PC-3 (cell line): ENCODE measurements at regions of chr3 and their contacts with region 1.

Region 1: DNA sequence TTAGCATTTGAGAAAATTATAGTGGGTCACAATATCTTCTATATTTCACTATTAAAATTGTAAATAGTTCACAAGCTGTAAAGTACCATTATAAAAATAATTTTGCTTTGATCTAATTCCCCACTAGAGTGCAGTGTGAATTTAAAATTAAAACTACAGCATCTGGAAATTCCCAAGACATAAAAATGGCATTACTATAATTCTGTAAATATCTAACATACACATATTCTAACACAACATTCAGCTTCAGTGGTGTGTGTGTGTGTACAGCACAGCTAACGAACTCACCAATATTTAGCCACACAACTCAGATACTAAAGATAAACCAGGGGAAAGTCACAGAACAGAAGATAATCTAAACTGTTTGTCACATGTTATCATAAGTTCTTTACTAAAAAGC is 424.9 kb upstream of the ZNF385D start:
- DNase-seq: peak; percentile 44
- ATAC-seq: peak; percentile 46; the same call in 1 of the 2 replicates
- H3K4me3 ChIP-seq: no peak overlapping the region
- H3K27ac ChIP-seq: no peak overlapping the region
- H3K4me1 ChIP-seq: no peaks in the 10 kb centered on the region
- H3K27me3 ChIP-seq: no peaks in the 10 kb centered on the region
- CTCF ChIP-seq: peak; percentile 56

Region 2: DNA sequence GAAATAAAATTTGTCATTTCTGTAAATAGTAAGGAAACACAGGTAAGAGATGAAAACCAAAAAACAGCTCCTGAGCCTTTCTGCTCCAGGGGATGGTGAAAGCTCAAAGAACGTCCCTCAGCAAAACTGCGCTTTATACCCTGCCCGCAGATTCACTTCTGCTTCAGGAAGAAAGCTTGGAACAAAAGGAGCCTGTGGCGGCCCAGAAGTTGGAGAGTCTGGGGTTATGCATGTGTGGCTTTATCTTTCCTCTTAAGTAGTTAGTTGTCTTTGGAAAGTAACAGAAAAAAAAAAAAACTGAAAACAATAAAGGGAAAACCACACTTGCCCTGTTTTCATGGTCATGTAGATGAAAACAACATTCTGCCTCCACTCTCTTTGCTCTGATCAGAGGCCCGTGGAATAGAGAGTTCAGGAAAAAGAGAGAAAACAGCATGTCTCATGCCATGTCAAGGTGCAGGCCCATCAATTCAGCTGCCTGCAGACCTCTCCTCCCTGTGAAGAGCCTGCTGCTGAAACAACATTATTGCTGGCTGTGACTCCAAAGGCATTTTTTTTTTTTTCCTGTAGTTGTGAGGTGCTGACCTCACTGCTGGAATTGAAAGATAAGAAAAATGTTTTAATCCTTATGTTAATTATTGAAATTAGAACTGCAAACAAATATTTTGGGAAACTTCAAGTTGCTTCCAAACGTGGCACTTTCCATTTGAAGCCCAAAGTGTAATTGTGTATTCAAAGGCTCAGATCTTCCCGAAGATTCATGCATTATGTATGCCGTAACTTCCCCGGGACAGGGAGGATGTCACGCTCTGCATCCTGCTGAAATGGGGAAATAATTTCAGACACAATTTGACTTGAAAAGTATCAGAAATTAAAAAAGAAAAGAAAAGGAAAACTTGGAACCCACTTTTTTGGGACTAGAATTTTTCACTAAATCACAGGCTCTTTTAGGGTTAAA is 316.5 kb before region 1 on chr3:
- CTCF ChIA-PET with region 1: no interaction called
- POLR2A ChIA-PET with region 1: no interaction called
- intact Hi-C with region 1: no loop called
- DNase-seq: no peak
- ATAC-seq: no peak
- H3K4me3 ChIP-seq: no peak overlapping the region
- H3K27ac ChIP-seq: no peak overlapping the region
- H3K4me1 ChIP-seq: no peaks in the 10 kb centered on the region
- H3K27me3 ChIP-seq: no peaks in the 10 kb centered on the region
- CTCF ChIP-seq: no peak

Region 3: GRCh38 chr3:22319446-22319845 is 143.5 kb after region 1 on chr3:
- CTCF ChIA-PET with region 1: no interaction called
- POLR2A ChIA-PET with region 1: no interaction called
- intact Hi-C with region 1: loop called (anchors 2 kb)
- DNase-seq: peak; percentile 37
- ATAC-seq: peak; percentile 62
- H3K4me3 ChIP-seq: no peak overlapping the region
- H3K27ac ChIP-seq: no peak overlapping the region
- H3K4me1 ChIP-seq: no peaks in the 10 kb centered on the region
- H3K27me3 ChIP-seq: no peaks in the 10 kb centered on the region
- CTCF ChIP-seq: no peak

Region 4: GRCh38 chr3:22334996-22335395 is 159.0 kb after region 1 on chr3:
- CTCF ChIA-PET with region 1: no interaction called
- POLR2A ChIA-PET with region 1: no interaction called
- intact Hi-C with region 1: no loop called
- DNase-seq: no peak
- ATAC-seq: no peak
- H3K4me3 ChIP-seq: no peak overlapping the region
- H3K27ac ChIP-seq: no peak overlapping the region
- H3K4me1 ChIP-seq: no peaks in the 10 kb centered on the region
- H3K27me3 ChIP-seq: no peaks in the 10 kb centered on the region
- CTCF ChIP-seq: no peak

Region 5: DNA sequence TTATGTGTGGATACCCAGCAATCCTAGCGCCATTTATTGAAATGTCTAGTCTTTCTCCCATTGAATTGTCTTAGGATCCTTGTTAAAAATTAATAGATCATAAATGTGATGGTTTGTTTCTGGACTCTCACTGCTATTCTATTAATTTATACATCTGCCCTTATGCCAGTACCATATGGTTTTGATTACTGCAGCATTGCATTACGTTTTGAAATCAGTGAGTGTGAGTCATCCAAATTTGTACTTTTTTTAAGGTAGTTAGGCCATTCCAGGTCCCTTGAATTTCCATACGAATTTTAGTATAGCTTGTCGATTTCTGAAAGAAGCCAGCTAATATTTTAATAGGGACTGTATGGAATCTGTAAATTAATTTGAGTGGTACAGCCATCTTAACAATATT is 223.6 kb after region 1 on chr3:
- CTCF ChIA-PET with region 1: no interaction called
- POLR2A ChIA-PET with region 1: no interaction called
- intact Hi-C with region 1: no loop called
- DNase-seq: no peak
- ATAC-seq: no peak
- H3K4me3 ChIP-seq: no peak overlapping the region
- H3K27ac ChIP-seq: no peak overlapping the region
- H3K4me1 ChIP-seq: peaks cover 5% of the 10 kb centered on the region; the same call in 1 of the 2 replicates
- H3K27me3 ChIP-seq: no peaks in the 10 kb centered on the region
- CTCF ChIP-seq: no peak

Region 6: GRCh38 chr3:22565393-22565792 is 389.4 kb after region 1 on chr3:
- CTCF ChIA-PET with region 1: interaction called, 5 read pairs
- POLR2A ChIA-PET with region 1: no interaction called
- intact Hi-C with region 1: loop called (anchors 1 kb)
- DNase-seq: no peak
- ATAC-seq: no peak
- H3K4me3 ChIP-seq: no peak overlapping the region
- H3K27ac ChIP-seq: no peak overlapping the region
- H3K4me1 ChIP-seq: peaks cover 21% of the 10 kb centered on the region
- H3K27me3 ChIP-seq: no peaks in the 10 kb centered on the region
- CTCF ChIP-seq: no peak

Region 7: DNA sequence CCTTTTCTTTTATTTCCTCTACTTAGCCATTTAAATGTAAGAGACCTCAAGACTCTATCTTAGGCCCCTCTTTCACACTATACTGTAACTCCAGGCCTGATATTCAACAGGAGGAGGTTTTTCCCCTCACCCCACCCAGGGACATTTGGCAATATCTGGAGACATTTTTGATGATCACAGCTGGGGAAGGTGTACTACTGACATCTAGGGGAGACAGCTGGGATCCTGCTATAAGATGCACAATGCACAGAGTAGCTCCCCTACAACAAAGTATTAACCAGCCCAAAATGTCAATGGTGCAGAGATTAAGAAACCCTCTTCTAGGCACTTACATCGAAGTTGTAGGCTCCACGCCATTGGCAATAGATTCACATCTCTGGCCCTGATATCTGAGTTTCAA is 509.6 kb after region 1 on chr3:
- CTCF ChIA-PET with region 1: interaction called, 6 read pairs
- POLR2A ChIA-PET with region 1: no interaction called
- intact Hi-C with region 1: loop called (anchors 1 kb)
- DNase-seq: peak; percentile 60
- ATAC-seq: peak; percentile 94
- H3K4me3 ChIP-seq: no peak overlapping the region
- H3K27ac ChIP-seq: no peak overlapping the region
- H3K4me1 ChIP-seq: no peaks in the 10 kb centered on the region
- H3K27me3 ChIP-seq: no peaks in the 10 kb centered on the region
- CTCF ChIP-seq: peak; percentile 87

Region 8: DNA sequence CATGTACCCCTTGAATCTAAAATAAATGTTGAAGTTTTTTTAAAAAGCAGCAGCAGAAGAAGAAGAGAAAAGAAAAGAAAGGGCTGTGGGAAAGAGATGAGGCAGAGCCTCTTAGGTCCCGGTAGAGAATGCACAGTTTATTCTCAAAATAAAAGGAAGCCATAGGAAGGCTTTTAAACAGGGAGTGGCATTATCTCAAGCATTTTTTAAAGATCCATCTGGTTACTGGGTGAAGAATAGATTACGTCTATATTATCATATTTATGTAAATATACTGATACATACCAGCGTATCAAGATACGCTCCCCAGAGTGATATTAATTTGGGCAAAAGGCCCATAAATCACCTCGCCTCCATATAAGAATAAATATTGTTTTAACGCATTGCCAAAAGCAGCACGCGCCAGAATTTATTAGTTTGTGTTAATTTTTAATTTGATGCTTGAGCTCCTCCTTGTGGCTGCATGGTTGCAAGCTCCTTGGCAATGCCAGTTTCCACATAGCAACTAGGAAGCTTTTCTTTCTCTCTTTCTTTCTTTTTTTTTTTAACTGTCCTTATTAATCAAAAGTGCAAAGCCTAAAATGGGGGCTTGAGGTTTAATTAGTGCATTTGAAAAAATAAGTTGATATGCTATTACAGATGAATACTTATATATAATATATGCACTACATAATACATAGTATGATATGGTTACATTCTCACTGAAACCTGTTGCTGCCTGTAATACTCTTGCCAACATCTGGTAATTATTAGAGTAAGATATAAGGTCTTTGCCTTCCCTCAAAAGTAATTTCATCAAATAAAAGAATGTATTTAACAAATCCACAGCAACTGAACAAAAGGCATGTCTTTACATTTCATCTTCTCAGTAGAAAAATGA is 784.4 kb after region 1 on chr3:
- CTCF ChIA-PET with region 1: interaction called, 5 read pairs
- POLR2A ChIA-PET with region 1: no interaction called
- intact Hi-C with region 1: loop called (anchors 5 kb)
- DNase-seq: peak; percentile 74
- ATAC-seq: peak; percentile 66
- H3K4me3 ChIP-seq: no peak overlapping the region
- H3K27ac ChIP-seq: no peak overlapping the region
- H3K4me1 ChIP-seq: no peaks in the 10 kb centered on the region
- H3K27me3 ChIP-seq: no peaks in the 10 kb centered on the region
- CTCF ChIP-seq: peak; percentile 92